ENCODE measurements at regions of chr6 and their contacts with region 1.

Region 1: DNA sequence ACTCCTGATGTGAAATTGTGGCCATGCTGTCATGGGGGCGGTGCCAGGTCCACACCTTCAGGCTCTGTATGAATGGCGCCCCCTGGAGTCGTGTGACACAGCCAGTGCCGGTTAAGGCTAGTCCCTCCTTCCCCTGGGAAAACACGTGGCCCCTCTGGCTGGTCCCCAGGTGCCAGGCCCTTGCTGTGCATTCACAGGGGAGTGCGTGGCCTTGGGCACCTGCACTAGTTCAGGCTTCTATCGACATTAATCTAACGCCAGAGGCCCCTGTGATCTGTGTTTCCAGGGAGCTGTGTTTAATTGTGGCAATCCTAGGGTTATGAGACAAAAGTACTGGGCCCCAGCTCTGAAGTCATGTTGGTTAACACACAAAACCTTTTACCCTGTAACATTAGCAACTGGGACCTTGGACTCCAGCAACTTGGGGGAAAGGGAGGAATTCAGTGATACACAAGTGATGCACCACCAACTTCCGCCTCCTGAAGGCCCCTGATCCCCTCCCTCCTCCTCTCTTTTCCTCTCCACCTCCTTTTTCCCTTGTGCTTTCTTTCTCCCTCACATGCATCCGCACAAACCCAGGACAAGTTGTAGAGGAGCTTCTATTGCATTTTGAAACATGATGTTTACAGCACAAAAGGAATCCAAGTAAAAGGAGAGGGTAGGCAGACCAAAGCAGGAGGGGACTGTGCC is 74.0 kb downstream of the SSR1 start:
- DNase-seq: peak; percentile 87
- H3K4me3 ChIP-seq: no peak overlapping the region
- H3K27ac ChIP-seq: peak overlapping the region; percentile 63
- H3K4me1 ChIP-seq: peaks cover 74% of the 10 kb centered on the region
- H3K27me3 ChIP-seq: no peaks in the 10 kb centered on the region
- CTCF ChIP-seq: peak; percentile 78

Region 2: DNA sequence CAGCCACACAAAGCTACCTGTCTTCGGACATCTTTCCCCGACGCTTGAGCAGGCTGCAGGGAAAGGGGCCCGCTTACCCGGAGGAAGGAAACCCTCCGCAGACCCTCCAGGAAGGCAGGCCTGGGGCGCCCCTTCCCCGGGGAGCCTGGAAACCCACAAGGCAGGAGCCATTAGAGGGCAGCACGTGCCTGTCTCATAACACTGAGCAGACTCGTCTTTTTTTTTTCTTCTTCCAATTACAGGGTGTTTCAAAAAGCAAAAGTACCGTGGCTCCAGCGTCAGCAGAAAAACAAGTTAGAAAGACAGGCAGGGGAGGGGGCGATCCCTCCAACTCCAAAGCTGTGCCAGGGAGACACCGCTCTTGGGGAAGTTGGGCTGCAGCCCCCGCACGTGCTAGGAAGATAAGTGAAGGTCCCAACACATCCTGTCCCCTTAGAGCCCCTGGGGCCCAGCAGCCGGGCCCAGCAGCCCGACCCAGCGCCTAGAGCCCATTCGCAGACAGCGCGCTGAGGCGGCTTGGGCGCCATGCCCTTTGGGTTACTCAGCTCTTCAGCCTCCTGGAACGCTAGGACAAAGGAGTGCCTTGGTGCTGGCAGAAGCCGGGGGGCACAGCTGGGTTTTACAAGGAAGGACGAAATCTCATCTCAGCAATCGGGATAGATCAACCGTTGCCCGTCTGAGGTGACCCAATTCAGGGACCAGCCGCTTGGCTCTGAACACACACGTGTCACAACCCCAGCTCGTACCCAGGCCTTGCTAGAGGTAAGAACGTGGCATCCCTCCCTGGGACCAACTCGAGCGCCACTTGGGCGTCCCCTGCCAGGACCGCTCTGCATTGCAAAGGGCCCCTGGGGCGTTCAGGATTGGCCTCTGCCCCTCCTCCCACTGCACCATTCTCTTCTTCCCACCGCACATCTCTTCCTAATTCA is 514.2 kb before region 1 on chr6:
- intact Hi-C with region 1: loop called (anchors 10 kb)
- DNase-seq: peak; percentile 73
- H3K4me3 ChIP-seq: peak overlapping the region; percentile 61
- H3K27ac ChIP-seq: peak overlapping the region; percentile 89
- H3K4me1 ChIP-seq: peaks cover 42% of the 10 kb centered on the region
- H3K27me3 ChIP-seq: no peaks in the 10 kb centered on the region
- CTCF ChIP-seq: peak; percentile 81

Region 3: DNA sequence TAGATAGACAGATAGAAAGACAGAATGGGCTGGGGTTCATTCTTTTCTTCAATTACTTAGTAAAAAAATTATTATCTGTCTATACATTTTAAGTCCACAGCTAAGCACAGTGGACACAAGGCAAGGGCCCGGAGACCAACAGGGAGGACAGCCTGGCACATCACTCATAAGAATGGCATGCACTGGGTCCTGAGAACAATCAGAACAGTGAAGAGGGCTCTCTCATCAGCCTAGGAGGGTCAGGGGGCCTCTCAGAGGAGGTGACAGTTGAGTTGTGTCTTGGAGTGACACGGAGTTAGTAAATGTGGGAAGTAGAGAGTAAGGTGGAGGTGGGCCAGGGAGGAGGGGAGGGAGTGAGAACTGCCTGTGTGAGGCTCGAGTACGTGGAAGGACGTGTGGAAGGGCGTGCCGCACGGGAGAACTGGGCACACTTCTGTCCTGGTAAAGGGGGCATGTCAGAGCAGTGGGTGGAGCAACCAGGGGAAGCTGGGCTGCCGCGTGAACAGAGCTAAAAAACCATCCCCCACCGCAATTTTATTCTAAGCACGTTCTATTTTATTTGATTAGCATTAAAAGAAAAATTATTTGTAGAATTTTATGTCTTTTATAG is 257.3 kb after region 1 on chr6:
- intact Hi-C with region 1: no loop called
- DNase-seq: peak; percentile 23
- H3K4me3 ChIP-seq: no peak overlapping the region
- H3K27ac ChIP-seq: no peak overlapping the region
- H3K4me1 ChIP-seq: no peaks in the 10 kb centered on the region
- H3K27me3 ChIP-seq: peaks cover 11% of the 10 kb centered on the region
- CTCF ChIP-seq: no peak

Region 4: DNA sequence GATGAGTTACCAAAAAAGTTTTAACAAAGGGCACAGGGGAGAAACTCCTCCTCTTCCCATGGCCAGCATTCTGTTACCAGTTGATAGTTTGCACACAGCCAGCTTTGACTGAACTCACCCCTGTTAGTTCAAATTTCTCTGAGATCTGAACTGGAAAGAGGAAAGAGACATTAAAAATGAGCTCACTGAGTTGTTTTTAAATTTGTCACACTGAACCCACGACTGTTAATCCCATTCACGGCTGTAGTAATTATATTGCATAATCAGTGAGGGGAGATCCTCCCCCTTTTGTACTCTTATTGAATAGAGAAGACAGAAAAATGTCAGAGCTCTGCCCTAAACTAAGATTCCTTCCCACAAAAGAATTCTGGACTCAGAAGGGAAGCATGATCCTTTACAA is 284.9 kb after region 1 on chr6:
- intact Hi-C with region 1: no loop called
- DNase-seq: no peak
- H3K4me3 ChIP-seq: no peak overlapping the region
- H3K27ac ChIP-seq: no peak overlapping the region
- H3K4me1 ChIP-seq: no peaks in the 10 kb centered on the region
- H3K27me3 ChIP-seq: peaks cover 50% of the 10 kb centered on the region
- CTCF ChIP-seq: no peak